Right cardiac atrium (tissue), 5 donors: ENCODE measurements at regions of chr1 and their contacts with region 1.

Region 1: DNA sequence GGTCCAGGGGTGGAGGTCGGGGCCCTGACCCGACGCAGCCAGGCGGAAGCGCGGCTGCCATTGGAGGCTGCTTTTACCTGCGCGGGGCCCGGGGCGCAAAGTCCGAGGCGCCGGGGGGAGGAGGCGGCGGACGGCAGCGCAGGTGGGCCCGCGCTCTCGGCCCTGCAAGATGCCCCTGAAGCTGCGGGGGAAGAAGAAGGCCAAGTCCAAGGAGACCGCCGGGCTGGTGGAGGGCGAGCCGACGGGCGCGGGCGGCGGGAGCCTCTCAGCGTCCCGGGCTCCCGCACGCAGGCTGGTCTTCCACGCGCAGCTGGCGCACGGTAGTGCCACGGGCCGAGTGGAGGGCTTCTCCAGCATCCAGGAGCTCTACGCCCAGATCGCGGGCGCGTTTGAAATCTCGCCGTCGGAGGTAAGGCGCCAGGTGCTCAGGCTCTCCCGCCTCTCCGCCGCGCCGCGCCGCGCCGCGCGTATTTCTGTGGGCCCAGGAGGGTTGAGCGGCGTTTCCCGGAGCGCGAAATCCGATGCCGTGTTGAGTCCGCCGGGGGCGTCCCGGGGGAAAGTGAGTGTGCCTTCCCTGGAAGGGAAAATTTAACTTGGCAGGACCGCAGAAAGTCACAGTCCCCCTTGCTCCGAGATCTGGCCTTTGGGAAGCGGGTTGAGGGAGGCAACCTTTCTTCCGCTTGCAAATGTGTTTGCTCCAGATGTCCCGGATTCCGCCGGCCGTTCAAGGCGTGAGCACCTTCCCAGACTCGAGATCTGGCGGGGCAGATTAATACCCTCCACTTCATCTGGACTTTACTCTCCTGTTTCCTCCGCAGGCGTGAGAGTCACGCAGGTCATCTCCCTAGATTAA is at the start of gene GIPC2:
- DNase-seq: peak; percentile 41 to 80 (median 72)
- ATAC-seq: peak; percentile 69 to 81
- H3K4me3 ChIP-seq: peak within 1 kb of the TSS; percentile 83
- H3K27ac ChIP-seq: peak within 1 kb of the TSS; percentile 59
- H3K4me1 ChIP-seq: no peaks in the 10 kb centered on the region
- H3K27me3 ChIP-seq: no peaks in the 10 kb centered on the region
- total RNA-seq, gene GIPC2: 1.3 to 1.8 (median 1.7) TPM

Region 2: DNA sequence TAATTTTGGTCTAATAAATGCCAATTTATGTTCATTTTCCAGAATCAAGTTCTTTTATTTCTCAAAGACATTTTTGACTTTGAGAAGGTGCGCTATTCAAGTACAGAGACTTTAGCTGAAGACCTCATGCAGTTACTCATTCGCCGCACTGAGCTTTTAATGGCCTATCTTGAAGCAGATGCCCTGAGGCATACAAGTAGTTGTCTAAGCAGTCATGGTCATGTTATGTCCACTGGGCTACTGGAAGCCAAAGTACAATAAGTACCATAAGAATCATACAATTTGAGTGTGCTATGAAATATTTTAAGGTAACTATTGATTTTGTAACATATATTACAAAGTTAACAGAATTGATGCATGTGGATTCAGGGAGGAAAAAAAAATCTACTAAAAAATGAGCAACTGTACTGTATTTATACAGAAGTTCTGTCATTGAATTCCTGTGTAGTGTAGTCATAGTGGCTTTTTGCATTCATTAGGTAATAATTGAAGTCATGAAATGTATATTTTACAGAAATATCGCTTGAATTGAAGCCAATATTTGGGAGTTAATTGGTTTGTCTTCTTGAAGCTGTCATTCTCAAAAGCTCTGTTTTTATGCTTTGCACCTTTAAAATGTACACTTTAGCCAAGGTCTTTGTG is 171.2 kb before region 1 on chr1:
- intact Hi-C with region 1: no loop called
- DNase-seq: no peak
- ATAC-seq: no peak
- H3K4me3 ChIP-seq: no peak overlapping the region
- H3K27ac ChIP-seq: no peak overlapping the region
- H3K4me1 ChIP-seq: no peaks in the 10 kb centered on the region
- H3K27me3 ChIP-seq: no peaks in the 10 kb centered on the region

Region 3: DNA sequence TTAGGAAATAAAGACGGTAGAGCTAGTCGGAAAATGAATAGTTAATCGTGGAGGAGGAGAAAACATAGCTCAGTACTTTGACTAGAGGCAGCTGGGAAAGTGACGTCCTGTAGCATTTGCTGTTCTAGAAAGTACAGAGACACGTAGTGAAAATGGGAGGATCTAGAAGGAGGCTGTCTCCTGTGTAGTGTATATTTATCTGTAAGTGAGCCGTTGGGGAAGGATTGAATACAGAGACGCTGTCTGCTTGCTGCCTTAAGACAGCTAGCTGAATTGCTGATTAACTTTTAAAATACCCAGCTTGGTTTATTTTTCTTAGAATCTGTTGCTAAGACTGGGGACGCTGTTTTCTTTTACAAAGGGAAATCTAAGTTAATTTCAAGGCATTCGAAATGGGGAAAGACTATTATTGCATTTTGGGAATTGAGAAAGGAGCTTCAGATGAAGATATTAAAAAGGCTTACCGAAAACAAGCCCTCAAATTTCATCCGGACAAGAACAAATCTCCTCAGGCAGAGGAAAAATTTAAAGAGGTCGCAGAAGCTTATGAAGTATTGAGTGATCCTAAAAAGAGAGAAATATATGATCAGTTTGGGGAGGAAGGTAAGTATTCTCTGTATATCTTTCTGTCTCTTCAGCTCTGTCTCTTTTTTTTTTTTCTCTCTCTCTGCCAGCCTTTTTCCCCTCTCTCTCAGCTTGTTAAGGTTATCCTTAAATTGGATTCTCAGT is 41.3 kb before region 1 on chr1 and contains the start of gene DNAJB4:
- intact Hi-C with region 1: loop called in 1 of 4 experiments (anchors 5 kb)
- DNase-seq: peak in 2 of 3 donors; percentile 48 to 58
- ATAC-seq: peak; percentile 99 to 100
- H3K4me3 ChIP-seq: peak within 1 kb of the TSS; percentile 100
- H3K27ac ChIP-seq: peak within 1 kb of the TSS; percentile 75
- H3K4me1 ChIP-seq: no peaks in the 10 kb centered on the region
- H3K27me3 ChIP-seq: no peaks in the 10 kb centered on the region
- total RNA-seq, gene DNAJB4: 71.2 to 106 (median 98.6) TPM

Region 4: GRCh38 chr1:78095593-78095992 is 49.4 kb after region 1 on chr1:
- intact Hi-C with region 1: loop called in 2 of 4 experiments (anchors 10 kb)
- DNase-seq: no peak
- ATAC-seq: peak in 1 of 2 donors; percentile 39
- H3K4me3 ChIP-seq: no peak overlapping the region
- H3K27ac ChIP-seq: no peak overlapping the region
- H3K4me1 ChIP-seq: no peaks in the 10 kb centered on the region
- H3K27me3 ChIP-seq: no peaks in the 10 kb centered on the region

Region 5: DNA sequence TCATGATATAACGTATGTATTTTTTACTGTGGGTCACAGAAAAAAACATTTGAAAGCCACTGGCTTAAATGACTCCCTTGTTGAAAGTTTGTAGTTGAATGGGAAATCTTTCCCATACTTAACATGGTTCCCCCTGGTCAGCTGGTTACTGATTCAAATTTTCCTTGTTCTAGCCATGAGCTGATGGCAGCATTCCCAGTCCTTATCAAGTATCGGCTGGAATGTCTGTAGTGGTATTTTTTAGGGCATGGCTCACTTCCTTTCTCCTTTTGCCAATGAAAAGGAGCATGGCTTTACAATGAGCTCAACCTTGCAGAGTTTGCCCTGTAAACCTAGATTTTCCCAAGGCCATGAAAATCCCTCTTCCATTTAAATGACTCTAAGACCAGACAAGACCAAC is 55.4 kb after region 1 on chr1:
- intact Hi-C with region 1: loop called in 2 of 4 experiments (anchors 10 kb)
- DNase-seq: peak in 1 of 3 donors; percentile 40
- ATAC-seq: peak; percentile 87 to 93
- H3K4me3 ChIP-seq: no peak overlapping the region
- H3K27ac ChIP-seq: no peak overlapping the region
- H3K4me1 ChIP-seq: no peaks in the 10 kb centered on the region
- H3K27me3 ChIP-seq: no peaks in the 10 kb centered on the region